A549 (cell line): ENCODE measurements at regions of chr5 and their contacts with region 1.

Region 1: GRCh38 chr5:172473427-172473826 is 19.1 kb upstream of the SH3PXD2B start:
- DNase-seq: no peak
- ATAC-seq: no peak
- H3K4me3 ChIP-seq: no peak overlapping the region
- H3K27ac ChIP-seq: no peak overlapping the region
- H3K4me1 ChIP-seq: no peaks in the 10 kb centered on the region
- CTCF ChIP-seq: no peak
- EP300 ChIP-seq: no peak
- POLR2A ChIP-seq: no peak
- RAD21 ChIP-seq: no peak

Region 2: GRCh38 chr5:172458976-172459782 is 14.2 kb before region 1 on chr5:
- CTCF ChIA-PET with region 1: interaction called, 14 read pairs
- POLR2A ChIA-PET with region 1: no interaction called
- DNase-seq: no peak
- ATAC-seq: no peak
- H3K4me3 ChIP-seq: no peak overlapping the region
- H3K27ac ChIP-seq: no peak overlapping the region
- H3K4me1 ChIP-seq: peaks cover 7% of the 10 kb centered on the region
- CTCF ChIP-seq: no peak
- EP300 ChIP-seq: no peak
- POLR2A ChIP-seq: no peak
- RAD21 ChIP-seq: no peak